BJ (cell line): ENCODE measurements at regions of chr4 and their contacts with region 1.

Region 1: DNA sequence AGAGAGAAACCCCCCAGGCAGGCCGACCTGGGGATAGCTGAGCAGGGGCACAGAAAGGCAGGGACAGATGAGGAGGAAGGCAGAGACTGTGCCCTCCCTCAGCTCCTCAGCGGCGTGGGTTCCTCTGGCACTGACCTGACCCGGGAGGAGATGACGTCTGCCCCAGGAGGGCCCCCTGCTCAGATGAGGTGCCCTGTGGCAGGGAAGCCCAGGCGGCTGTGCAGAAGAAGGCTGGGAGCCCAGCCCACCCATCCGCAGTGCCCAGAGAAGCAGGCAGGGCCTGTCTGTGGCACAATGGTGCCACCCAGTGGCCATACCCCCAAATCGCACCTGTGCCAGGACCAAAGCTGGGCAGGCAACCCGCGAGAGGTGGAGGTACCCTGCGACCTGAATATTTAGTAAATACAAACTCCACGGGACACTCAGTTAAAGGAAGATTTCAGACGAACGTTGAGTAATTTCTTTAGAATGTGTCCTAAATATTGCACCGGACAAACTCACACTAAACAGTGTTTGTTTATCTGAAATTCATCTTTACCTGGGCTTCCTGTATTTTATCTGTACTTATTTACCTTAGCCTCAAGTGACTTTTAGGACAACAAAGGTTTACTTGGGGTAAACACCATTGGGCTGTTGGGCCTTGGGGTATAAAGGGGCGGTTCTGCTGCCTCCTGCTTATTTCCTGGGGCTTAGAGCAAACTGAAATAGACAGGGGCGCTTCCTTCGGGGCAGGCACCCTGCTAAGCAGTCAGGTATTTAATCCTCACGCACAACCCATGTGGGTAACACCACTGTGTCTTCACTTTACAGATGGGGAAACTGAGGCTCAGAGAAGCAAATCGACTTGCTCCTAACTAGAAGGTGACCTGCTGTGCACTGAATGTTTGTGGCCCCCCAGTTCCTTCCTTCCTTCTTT is 46.5 kb upstream of the HMX1 start:
- DNase-seq: no peak
- H3K4me3 ChIP-seq: no peak overlapping the region
- H3K27me3 ChIP-seq: no peaks in the 10 kb centered on the region
- CTCF ChIP-seq: peak; percentile 90

Region 2: DNA sequence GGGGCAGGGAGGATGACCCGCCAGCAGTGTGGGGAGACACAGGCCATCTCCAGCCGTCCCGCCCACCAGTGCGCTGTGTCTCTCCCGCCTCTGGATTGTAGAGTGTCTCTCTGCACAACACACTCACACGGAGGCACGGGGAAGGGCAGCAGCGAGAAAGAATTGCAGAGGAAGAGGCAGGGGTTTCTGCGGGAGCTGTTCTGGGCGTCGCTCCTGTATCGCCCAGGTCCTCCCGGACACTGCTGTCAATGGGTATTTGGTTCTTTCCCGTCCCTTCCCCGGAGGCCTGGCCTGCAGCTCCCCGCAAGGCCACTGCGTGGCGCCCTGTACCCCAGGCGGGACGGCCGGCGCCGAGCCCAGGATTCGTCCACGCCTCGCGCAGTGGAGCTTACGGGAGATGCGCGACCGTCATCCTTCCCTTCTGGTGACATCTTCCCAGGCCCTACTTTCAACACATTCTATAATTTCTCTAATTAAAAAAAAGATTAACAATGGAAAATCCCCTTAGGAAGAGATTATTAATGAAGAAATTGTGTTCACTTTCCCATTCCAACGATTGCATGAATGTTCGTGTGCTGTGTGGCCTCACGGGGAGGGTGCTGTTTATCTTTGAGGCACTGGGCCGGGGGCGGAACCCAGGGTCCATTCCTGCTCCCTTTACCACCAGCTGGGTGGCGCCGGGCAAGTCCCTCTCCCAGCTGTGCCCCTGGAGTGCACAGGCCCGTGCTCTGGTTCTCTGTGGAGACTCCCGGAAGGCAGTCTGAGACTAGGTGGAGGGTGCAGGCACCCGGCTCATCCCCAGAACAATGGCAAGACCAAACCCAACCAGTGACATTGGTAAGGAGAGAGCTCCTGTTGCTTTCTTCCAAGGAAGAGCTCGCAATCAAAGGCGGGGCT is 229.8 kb before region 1 on chr4:
- CTCF ChIA-PET with region 1: interaction called, 14 read pairs
- POLR2A ChIA-PET with region 1: no interaction called
- DNase-seq: no peak
- H3K4me3 ChIP-seq: no peak overlapping the region
- H3K27me3 ChIP-seq: no peaks in the 10 kb centered on the region
- CTCF ChIP-seq: peak; percentile 71

Region 3: GRCh38 chr4:8739820-8740665 is 178.1 kb before region 1 on chr4:
- CTCF ChIA-PET with region 1: no interaction called
- POLR2A ChIA-PET with region 1: no interaction called
- DNase-seq: no peak
- H3K4me3 ChIP-seq: no peak overlapping the region
- H3K27me3 ChIP-seq: no peaks in the 10 kb centered on the region
- CTCF ChIP-seq: no peak

Region 4: GRCh38 chr4:8893624-8894423 is 24.3 kb before region 1 on chr4:
- CTCF ChIA-PET with region 1: no interaction called
- POLR2A ChIA-PET with region 1: no interaction called
- DNase-seq: no peak
- H3K4me3 ChIP-seq: no peak overlapping the region
- H3K27me3 ChIP-seq: peaks cover 20% of the 10 kb centered on the region
- CTCF ChIP-seq: no peak